ENCODE measurements at regions of chr9 and their contacts with region 1.

Region 1: GRCh38 chr9:18861609-18862544 is 171.1 kb downstream of the SAXO1 start:
- DNase-seq: no peak
- H3K4me3 ChIP-seq: no peak overlapping the region
- H3K27ac ChIP-seq: peak overlapping the region in 3 of 4 donors; percentile 5 to 52 (median 8)
- H3K4me1 ChIP-seq: peaks cover 0 to 13% (median under 1%) of the 10 kb centered on the region in 4 donors
- H3K27me3 ChIP-seq: no peaks in the 10 kb centered on the region
- CTCF ChIP-seq: no peak
- EP300 ChIP-seq: no peak
- POLR2A ChIP-seq: no peak

Region 2: DNA sequence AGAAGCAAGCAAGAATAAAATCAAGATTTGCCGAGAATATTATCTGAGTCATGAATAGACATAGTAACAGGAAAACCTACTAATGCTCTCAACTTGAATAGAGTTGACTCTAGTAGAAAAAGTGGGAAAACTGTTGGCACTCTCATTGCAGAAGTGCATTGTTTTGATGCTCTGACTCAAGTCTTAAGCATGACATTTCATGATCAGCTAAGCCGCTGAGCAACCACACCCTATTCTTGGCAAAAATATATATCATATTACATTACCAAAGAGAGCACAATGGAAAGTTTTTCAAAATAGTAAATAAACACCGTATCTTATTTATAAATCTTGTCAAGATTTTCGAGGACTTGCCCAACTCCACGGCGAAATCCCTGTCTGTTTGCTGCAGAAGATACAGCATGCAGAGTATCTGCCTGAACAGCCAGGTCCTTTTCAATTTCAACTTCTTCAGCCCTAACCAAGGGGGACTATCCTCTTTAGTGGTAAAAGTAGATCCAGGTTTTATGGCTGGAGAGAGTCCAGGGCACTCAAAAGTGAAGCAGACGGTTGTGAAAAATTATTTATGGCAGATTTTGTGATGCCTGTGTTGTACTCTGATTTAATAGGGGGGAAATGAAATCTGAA is 401.8 kb before region 1 on chr9:
- in situ Hi-C with region 1: no loop called
- intact Hi-C with region 1: loop called (anchors 10 kb)
- DNase-seq: no peak
- H3K4me3 ChIP-seq: no peak overlapping the region
- H3K27ac ChIP-seq: no peak overlapping the region
- H3K4me1 ChIP-seq: peaks cover 0 to 10% (median 4%) of the 10 kb centered on the region in 4 donors
- H3K27me3 ChIP-seq: no peaks in the 10 kb centered on the region
- CTCF ChIP-seq: no peak
- EP300 ChIP-seq: no peak
- POLR2A ChIP-seq: no peak

Region 3: DNA sequence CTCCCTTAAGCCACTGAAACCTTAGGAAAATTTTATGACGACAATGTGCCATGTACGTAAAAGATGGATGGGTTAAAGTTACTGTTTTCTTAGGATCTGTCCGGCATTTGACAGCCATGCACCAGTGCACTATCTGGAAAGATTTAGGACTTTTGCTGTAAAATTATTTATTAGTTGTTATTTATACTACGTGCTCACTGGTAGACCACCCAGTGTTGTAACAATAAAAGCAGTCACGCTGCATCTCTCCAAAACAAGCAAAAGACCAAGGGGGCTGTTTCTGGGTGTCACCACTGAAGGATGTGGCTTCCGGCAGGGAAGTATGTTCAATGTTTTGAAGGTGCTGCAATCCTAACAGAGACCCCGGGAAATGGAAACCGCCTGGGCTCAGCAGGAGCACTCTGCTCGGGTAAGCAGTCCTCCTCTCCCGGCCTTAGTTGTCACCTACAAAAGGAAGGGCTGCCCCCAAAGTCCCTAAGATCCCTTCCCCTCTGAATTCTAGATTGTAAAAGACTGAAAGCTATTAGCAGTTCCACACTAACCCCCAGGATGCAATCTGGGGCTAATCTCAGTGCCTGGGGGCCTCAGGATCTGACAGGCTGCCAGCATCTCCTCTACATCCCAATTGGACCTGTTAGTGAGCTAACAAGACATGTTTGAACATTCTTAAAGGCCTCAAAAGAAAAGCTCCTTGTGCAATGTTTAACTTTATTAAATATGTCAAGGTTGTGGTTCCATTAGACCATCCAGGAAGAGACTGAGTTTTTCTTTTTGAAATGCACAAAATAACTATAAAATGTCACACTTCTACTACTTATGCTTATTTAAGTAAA is 132.6 kb after region 1 on chr9:
- in situ Hi-C with region 1: no loop called
- intact Hi-C with region 1: loop called (anchors 10 kb)
- DNase-seq: no peak
- H3K4me3 ChIP-seq: no peak overlapping the region
- H3K27ac ChIP-seq: no peak overlapping the region
- H3K4me1 ChIP-seq: no peaks in the 10 kb centered on the region
- H3K27me3 ChIP-seq: no peaks in the 10 kb centered on the region
- CTCF ChIP-seq: no peak
- EP300 ChIP-seq: no peak
- POLR2A ChIP-seq: no peak